ENCODE measurements at regions of chr16 and their contacts with region 1.

Region 1: DNA sequence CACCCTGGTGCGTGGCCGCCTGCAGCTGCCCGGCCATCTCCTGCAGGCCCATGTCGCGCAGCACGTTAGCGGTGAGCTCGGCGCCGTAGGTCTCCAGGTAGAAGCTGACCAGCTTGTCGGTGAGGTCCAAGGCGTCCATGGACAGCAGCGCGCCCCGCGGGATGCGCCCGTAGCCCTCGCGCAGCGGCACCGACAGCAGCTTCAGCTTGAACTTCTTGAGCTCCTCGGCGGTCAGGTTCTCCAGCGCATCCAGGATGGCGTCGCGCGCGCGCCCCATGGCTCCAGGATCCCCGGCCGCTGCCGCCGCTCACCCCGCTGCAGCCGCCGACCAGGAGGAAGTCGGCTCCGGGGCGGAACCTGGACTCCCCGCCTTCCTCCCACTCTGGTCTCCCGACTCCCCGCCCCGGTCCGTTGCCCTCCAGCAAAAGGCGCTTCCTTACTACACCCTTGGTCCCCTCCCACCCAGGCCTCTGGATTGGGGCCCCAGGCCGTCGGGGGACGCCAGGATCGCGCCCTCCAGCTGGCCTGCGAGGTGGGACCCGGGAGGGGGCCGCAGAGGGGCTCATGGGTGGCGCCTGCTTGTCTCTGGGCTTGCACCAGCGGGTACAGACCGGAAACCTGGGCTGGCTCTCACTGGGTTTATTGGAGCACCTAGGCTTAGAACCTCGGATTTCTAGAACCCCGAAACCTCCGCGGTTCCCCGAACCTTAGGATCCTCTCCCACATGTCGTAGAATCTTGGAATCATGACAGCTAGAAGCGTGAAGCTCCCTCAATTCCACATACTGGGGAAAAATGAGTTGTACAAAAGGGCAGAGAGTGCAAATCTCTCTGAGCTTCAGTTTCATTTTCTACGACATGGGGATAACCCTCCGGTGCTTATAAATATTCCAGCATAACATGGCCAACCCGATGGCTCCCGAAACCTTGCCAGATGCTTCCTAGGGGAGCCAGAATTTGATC is at the start of gene PYCARD:
- DNase-seq: peak; percentile 64
- ATAC-seq: peak; percentile 43
- H3K4me3 Mint-ChIP-seq: peak within 1 kb of the TSS; percentile 90
- H3K27ac Mint-ChIP-seq: peak within 1 kb of the TSS; percentile 79
- H3K4me1 Mint-ChIP-seq: peaks cover 58% of the 10 kb centered on the region
- H3K27me3 Mint-ChIP-seq: peaks cover 7% of the 10 kb centered on the region
- total RNA-seq, gene PYCARD: 55.4 to 99.1 TPM

Region 2: GRCh38 chr16:31010585-31011325 is 191.9 kb before region 1 on chr16 and contains the start of gene STX1B:
- CTCF ChIA-PET with region 1: no interaction called
- DNase-seq: no peak
- ATAC-seq: peak; percentile 52
- H3K4me3 Mint-ChIP-seq: peak within 1 kb of the TSS; percentile 51
- H3K27ac Mint-ChIP-seq: no peak within 1 kb of the TSS
- H3K4me1 Mint-ChIP-seq: peaks cover 6% of the 10 kb centered on the region
- H3K27me3 Mint-ChIP-seq: peaks cover 67% of the 10 kb centered on the region
- total RNA-seq, gene STX1B: 3.5 to 3.6 TPM

Region 3: DNA sequence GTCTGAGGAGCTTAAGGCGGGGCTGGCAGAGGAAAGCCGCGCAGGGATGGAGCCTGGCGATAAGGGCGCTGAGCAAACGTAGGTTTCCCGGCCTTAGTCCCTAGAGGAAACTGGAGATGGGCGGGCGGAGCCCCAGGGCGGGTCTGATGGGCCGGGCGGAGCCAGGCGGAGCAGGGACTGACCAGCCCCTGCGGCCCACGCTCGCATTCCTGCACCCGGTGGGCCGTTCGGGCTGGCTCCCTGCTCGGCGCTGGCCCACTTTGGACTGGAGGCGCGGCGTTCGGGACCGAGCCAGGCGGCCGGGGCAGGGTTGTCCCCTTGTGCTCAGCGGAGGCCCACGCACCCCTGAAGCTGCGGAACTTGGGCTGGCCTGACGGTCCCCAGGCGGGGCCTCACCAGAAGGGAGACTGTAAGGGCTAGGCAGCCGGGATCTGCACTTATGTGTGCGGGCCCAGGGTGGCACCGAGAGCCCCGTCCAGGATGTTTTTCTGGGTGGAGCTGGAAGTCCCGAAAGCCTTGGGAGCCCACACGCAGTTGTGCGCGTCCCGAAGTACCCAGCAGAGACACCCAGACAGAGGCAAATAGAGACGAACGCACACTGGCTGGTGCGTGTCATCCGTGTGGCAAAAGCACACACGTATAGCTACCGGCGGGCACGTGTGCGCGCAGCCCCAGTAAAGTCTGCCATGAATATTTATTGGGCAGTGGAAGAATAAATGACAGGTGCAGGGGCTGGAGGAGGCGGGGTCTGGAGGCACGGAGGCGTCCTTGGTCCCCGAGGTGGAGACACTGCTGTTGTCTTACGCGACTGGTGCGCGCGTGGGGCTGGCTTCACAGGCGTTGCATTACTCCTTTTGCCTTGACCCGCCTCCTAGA is 12.8 kb after region 1 on chr16:
- CTCF ChIA-PET with region 1: interaction called, 19 read pairs
- DNase-seq: no peak
- ATAC-seq: peak; percentile 53
- H3K4me3 Mint-ChIP-seq: peak overlapping the region; percentile 28
- H3K27ac Mint-ChIP-seq: no peak overlapping the region
- H3K4me1 Mint-ChIP-seq: peaks cover 30% of the 10 kb centered on the region
- H3K27me3 Mint-ChIP-seq: peaks cover 55% of the 10 kb centered on the region

Region 4: DNA sequence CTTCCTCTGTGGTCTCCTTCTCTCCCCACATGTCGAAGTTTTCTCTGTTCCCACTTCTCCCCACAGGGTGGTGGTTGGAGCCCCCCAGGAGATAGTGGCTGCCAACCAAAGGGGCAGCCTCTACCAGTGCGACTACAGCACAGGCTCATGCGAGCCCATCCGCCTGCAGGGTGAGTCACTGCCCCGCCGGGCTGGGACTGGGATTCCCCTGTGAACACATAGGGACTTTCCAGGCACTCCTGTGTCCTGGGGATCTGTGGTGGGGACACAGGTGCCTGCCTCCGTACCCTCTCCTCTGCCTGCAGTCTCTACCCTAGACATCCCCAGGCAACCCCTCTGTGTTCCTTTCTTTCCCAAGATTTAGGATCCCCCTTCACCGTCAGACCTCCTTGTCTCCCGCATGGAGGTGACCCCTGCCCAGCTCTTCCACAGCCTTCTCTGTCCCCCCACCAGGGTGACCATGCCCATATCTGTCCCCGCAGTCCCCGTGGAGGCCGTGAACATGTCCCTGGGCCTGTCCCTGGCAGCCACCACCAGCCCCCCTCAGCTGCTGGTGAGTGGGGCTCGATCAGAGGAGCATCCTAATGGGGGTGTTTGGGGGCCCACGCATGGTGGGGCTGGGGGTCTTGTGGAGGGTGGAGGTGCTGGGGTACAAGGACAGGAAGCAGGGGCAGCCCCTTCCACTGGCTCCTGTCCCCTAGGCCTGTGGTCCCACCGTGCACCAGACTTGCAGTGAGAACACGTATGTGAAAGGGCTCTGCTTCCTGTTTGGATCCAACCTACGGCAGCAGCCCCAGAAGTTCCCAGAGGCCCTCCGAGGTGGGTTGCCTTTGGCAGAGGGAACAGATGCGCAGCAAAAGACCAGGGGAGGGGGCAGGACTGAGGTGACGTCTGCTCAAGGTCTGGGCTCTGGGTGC is 62.9 kb after region 1 on chr16:
- CTCF ChIA-PET with region 1: no interaction called
- DNase-seq: peak; percentile 74
- ATAC-seq: peak; percentile 82
- H3K4me3 Mint-ChIP-seq: no peak overlapping the region
- H3K27ac Mint-ChIP-seq: peak overlapping the region; percentile 66
- H3K4me1 Mint-ChIP-seq: peaks cover 37% of the 10 kb centered on the region
- H3K27me3 Mint-ChIP-seq: no peaks in the 10 kb centered on the region

Region 5: GRCh38 chr16:31292704-31293103 is 90.0 kb after region 1 on chr16:
- CTCF ChIA-PET with region 1: no interaction called
- DNase-seq: no peak
- ATAC-seq: no peak
- H3K4me3 Mint-ChIP-seq: no peak overlapping the region
- H3K27ac Mint-ChIP-seq: no peak overlapping the region
- H3K4me1 Mint-ChIP-seq: no peaks in the 10 kb centered on the region
- H3K27me3 Mint-ChIP-seq: peaks cover 32% of the 10 kb centered on the region

Region 6: DNA sequence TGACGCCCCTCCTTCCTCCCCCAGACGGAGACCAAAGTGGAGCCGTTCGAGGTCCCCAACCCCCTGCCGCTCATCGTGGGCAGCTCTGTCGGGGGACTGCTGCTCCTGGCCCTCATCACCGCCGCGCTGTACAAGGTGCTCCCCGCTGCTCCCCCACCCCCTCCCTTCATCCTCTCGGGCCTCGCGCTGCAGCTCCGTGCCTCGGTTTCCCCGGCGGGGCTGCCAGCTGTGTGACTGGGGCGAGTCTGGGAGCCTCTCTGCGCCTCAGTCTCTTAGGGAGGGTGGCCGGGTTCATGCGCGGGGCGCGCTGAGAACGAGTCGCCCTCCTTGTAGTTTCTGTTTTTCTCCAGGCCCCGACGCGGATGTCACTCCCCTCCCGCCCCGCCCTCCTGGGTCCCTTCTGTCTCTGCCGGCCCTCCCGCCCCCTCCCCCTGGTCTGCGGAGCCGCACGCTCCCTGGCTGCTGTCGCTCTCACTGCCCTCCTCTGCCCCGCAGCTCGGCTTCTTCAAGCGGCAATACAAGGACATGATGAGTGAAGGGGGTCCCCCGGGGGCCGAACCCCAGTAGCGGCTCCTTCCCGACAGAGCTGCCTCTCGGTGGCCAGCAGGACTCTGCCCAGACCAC is 128.6 kb after region 1 on chr16:
- CTCF ChIA-PET with region 1: interaction called, 11 read pairs
- DNase-seq: peak; percentile 67
- ATAC-seq: peak; percentile 80
- H3K4me3 Mint-ChIP-seq: peak overlapping the region; percentile 76
- H3K27ac Mint-ChIP-seq: no peak overlapping the region
- H3K4me1 Mint-ChIP-seq: peaks cover 23% of the 10 kb centered on the region
- H3K27me3 Mint-ChIP-seq: peaks cover 25% of the 10 kb centered on the region

Region 7: DNA sequence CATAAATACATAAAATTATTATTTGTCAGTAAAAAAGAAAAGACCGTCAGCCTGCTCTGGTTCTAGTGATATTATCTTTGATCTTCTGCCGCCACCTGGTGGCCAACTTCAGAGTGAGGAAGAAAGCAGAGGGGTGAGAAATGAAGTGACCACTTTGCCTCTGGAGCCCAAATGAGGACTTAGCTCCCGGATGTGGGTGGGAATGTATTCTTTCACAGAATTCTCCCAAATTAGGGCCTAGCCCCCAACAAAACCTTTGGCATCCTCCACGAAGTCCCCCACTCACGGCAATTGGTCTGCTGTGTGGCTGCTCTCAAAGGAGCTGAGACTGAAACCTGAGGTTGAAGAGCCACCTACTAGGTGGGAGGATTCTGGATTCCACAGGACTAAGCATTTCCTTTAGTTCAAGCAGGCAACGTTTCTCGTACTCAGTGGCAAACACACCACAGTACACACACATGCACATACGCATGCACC is 666.0 kb after region 1 on chr16:
- CTCF ChIA-PET with region 1: interaction called, 10 read pairs
- DNase-seq: peak; percentile 89
- ATAC-seq: peak; percentile 38
- H3K4me3 Mint-ChIP-seq: peak overlapping the region; percentile 64
- H3K27ac Mint-ChIP-seq: peak overlapping the region; percentile 86
- H3K4me1 Mint-ChIP-seq: peaks cover 53% of the 10 kb centered on the region
- H3K27me3 Mint-ChIP-seq: no peaks in the 10 kb centered on the region

Measured in activated CD8-positive, alpha-beta memory T cell treated with anti-CD3 and anti-CD28 coated beads, Interleukin-2, amount 10 ng/mL, durations not matched to agents 7 days and 5 days (primary cell).